A549 (cell line): ENCODE measurements at regions of chr19 and their contacts with region 1.

Region 1: GRCh38 chr19:45753546-45753945 is 15.5 kb downstream of the SIX5 start:
- DNase-seq: no peak
- ATAC-seq: peak; percentile 23 to 56; a peak in 3 of 6 replicates
- H3K4me3 ChIP-seq: no peak overlapping the region
- H3K27ac ChIP-seq: no peak overlapping the region
- H3K4me1 ChIP-seq: 0 out of 3 replicates have a peak, but pooled peaks cover 6% of the 10 kb centered on the region
- CTCF ChIP-seq: no peak
- EP300 ChIP-seq: no peak
- POLR2A ChIP-seq: no peak
- RAD21 ChIP-seq: no peak

Region 2: GRCh38 chr19:45653634-45654033 is 99.9 kb before region 1 on chr19:
- CTCF ChIA-PET with region 1: no interaction called
- POLR2A ChIA-PET with region 1: no interaction called
- DNase-seq: no peak
- ATAC-seq: peak; percentile 6 to 28; a peak in 2 of 6 replicates
- H3K4me3 ChIP-seq: no peak overlapping the region
- H3K27ac ChIP-seq: no peak overlapping the region
- H3K4me1 ChIP-seq: no peaks in the 10 kb centered on the region
- CTCF ChIP-seq: no peak
- EP300 ChIP-seq: no peak
- POLR2A ChIP-seq: no peak
- RAD21 ChIP-seq: no peak

Region 3: DNA sequence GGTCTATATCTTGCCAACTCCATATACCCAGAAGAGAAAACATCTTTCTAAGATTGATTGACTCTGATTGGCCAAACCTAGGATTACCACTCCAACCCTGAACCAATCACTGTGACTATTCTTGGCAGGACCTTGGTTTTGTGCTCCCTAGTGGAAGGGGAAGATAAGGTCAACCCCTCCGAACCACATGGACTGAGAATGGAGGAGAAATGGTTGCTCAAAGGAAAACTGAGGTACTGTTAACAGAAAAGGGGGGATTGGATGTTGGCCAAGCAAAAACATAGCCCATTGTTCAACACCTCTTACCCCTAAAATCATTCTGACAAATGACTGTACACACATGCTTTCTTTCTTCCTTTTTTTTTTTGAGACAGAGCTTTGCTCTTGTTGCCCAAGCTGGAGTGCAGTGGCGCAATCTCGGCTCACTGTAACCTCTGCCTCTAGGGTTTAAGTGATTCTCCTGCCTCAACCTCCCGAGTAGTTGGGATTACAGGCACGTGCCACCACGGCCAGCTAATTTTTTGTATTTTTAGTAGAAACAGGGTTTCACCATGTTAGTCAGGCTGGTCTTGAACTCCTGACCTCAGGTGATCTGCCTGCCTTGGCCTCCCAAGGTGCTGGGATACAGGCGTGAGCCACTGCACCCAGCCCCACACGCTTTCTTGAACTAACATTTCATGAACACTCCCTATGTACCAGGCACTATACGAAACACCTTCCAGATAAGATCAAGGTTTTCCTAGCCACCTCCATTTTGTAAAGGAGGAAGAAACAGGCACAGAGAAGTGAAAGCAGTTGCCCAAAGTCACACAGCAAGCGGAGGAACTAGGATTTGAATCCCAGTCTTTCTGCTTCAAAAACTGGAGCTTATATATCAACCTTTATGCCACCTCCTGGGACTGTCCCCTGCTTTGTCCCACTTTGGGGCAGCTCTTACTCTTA is 13.8 kb before region 1 on chr19:
- CTCF ChIA-PET with region 1: interaction called, 68 read pairs
- POLR2A ChIA-PET with region 1: no interaction called
- DNase-seq: peak in 1 of 2 experiments; percentile 55
- ATAC-seq: peak; percentile 48 to 64; a peak in 3 of 6 replicates
- H3K4me3 ChIP-seq: no peak overlapping the region
- H3K27ac ChIP-seq: no peak overlapping the region
- H3K4me1 ChIP-seq: peaks cover 7% of the 10 kb centered on the region; the same call in 1 of the 3 replicates
- CTCF ChIP-seq: no peak
- EP300 ChIP-seq: no peak
- POLR2A ChIP-seq: no peak
- RAD21 ChIP-seq: no peak